Posterior vena cava (tissue), 2 donors: ENCODE measurements at regions of chr13 and their contacts with region 1.

Region 1: GRCh38 chr13:21641629-21642028 is 29.2 kb upstream of the FGF9 start:
- DNase-seq: no peak

Region 2: GRCh38 chr13:21948769-21949474 is 307.3 kb after region 1 on chr13:
- intact Hi-C with region 1: loop called in 1 of 2 experiments (anchors 10 kb)
- DNase-seq: no peak